HepG2 (cell line): ENCODE measurements at regions of chr6 and their contacts with region 1.

Region 1: GRCh38 chr6:56595490-56596122 is 47.1 kb downstream of the DST start:
- DNase-seq: peak; percentile 43
- ATAC-seq: peak; percentile 89
- H3K4me3 ChIP-seq: no peak overlapping the region
- H3K27ac ChIP-seq: no peak overlapping the region
- H3K4me1 ChIP-seq: no peaks in the 10 kb centered on the region
- H3K27me3 ChIP-seq: no peaks in the 10 kb centered on the region
- CTCF ChIP-seq: peak; percentile 74
- EP300 ChIP-seq: no peak
- POLR2A ChIP-seq: no peak
- RAD21 ChIP-seq: no peak

Region 2: DNA sequence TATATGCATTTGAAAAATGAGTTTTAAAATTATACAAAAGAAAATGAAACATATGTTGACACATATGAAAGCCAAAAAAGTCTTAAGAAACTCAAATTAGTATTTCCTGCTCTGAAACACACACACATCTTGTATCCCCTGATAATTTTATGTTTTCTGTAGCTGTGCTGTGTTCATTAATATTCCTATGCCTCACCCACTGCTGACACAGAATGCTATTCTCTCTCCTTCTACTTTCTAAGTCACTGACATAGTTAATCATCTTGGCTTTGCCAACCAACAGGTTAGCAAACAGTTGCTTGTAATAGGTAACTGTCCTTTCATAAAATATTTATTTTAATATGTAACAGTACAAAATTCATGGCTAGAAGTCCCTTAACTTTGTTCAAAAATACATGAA is 93.6 kb before region 1 on chr6:
- CTCF ChIA-PET with region 1: no interaction called
- POLR2A ChIA-PET with region 1: no interaction called
- in situ Hi-C with region 1: no loop called
- intact Hi-C with region 1: loop called (anchors 1 kb)
- DNase-seq: no peak
- ATAC-seq: no peak
- H3K4me3 ChIP-seq: no peak overlapping the region
- H3K27ac ChIP-seq: no peak overlapping the region
- H3K4me1 ChIP-seq: no peaks in the 10 kb centered on the region
- H3K27me3 ChIP-seq: no peaks in the 10 kb centered on the region
- CTCF ChIP-seq: no peak
- EP300 ChIP-seq: no peak
- POLR2A ChIP-seq: no peak
- RAD21 ChIP-seq: no peak